Body of pancreas (tissue), 4 donors: ENCODE measurements at regions of chr7 and their contacts with region 1.

Region 1: GRCh38 chr7:1474736-1475135 is 15.5 kb upstream of the MICALL2 start:
- DNase-seq: no peak
- ATAC-seq: no peak
- H3K4me3 ChIP-seq: no peak overlapping the region
- H3K27ac ChIP-seq: no peak overlapping the region
- H3K4me1 ChIP-seq: peaks cover 7% of the 10 kb centered on the region
- H3K27me3 ChIP-seq: no peaks in the 10 kb centered on the region
- CTCF ChIP-seq: no peak
- POLR2A ChIP-seq: no peak

Region 2: GRCh38 chr7:1439373-1440363 is 35.1 kb before region 1 on chr7:
- intact Hi-C with region 1: loop called (anchors 5 kb)
- DNase-seq: no peak
- ATAC-seq: no peak
- H3K4me3 ChIP-seq: no peak overlapping the region
- H3K27ac ChIP-seq: no peak overlapping the region
- H3K4me1 ChIP-seq: no peaks in the 10 kb centered on the region
- H3K27me3 ChIP-seq: no peaks in the 10 kb centered on the region
- CTCF ChIP-seq: peak in 2 of 7 experiments; percentile 16 to 24
- POLR2A ChIP-seq: no peak

Region 3: DNA sequence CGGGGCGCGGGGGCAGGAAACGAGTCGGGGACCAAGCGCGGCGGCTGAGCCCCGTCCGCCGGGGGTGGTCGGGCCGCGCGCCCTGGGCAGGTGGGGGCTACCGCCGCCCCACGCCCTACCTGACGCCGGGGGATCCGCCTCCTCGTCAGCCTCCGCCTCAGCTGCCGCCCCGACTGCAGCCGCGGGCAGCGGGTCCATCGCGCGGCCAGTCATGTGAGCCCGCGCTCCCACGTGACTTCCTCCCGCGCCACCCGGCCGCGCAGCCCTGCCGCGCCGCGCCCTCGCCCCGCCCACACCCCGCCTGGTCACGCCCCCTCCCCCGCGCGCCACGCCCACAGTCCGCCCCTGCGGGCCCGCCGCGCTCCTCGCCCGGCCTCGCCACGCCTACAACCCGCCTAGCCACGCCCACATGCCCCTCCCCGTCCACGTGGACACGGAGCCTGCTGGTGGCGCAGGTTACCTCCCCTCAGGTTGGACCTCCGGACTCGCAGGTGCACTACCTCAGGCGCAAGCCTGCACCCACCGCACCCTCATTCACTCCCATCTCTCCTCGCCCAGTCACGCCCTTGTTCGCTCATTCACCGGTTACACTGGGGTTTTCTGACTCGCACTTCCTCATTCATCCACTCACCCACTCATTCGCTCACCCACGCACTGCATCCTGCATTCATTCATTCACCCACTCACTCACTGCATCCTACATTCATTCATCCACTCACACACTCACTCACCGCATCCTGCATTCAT is 839.6 kb after region 1 on chr7 and contains the start of gene SNX8:
- intact Hi-C with region 1: no loop called
- DNase-seq: peak; percentile 92 to 96 (median 94)
- ATAC-seq: peak; percentile 96
- H3K4me3 ChIP-seq: peak within 1 kb of the TSS; percentile 53 to 89
- H3K27ac ChIP-seq: peak within 1 kb of the TSS; percentile 58 to 74 (median 68)
- H3K4me1 ChIP-seq: peaks cover 6% of the 10 kb centered on the region
- H3K27me3 ChIP-seq: no peaks in the 10 kb centered on the region
- CTCF ChIP-seq: peak in 3 of 7 experiments; percentile 15 to 43 (median 30)
- POLR2A ChIP-seq: peak in 2 of 3 donors; percentile 40 to 46
- total RNA-seq, gene SNX8: 5.3 to 6.2 TPM